PC-3 (cell line): ENCODE measurements at regions of chrX and their contacts with region 1.

Region 1: GRCh38 chrX:24838629-24839028 is 144.9 kb downstream of the POLA1 start:
- DNase-seq: peak; percentile 62
- ATAC-seq: no peak
- H3K4me3 ChIP-seq: no peak overlapping the region
- H3K27ac ChIP-seq: no peak overlapping the region
- H3K4me1 ChIP-seq: no peaks in the 10 kb centered on the region
- H3K27me3 ChIP-seq: no peaks in the 10 kb centered on the region
- CTCF ChIP-seq: peak; percentile 63

Region 2: GRCh38 chrX:24748202-24748843 is 90.3 kb before region 1 on chrX:
- CTCF ChIA-PET with region 1: no interaction called
- POLR2A ChIA-PET with region 1: no interaction called
- intact Hi-C with region 1: loop called (anchors 2 kb)
- DNase-seq: peak; percentile 2
- ATAC-seq: no peak
- H3K4me3 ChIP-seq: no peak overlapping the region
- H3K27ac ChIP-seq: no peak overlapping the region
- H3K4me1 ChIP-seq: no peaks in the 10 kb centered on the region
- H3K27me3 ChIP-seq: no peaks in the 10 kb centered on the region
- CTCF ChIP-seq: no peak

Region 3: GRCh38 chrX:24890677-24891076 is 52.0 kb after region 1 on chrX:
- CTCF ChIA-PET with region 1: no interaction called
- POLR2A ChIA-PET with region 1: no interaction called
- intact Hi-C with region 1: no loop called
- DNase-seq: peak; percentile 58
- ATAC-seq: peak; percentile 79
- H3K4me3 ChIP-seq: no peak overlapping the region
- H3K27ac ChIP-seq: no peak overlapping the region
- H3K4me1 ChIP-seq: 0 out of 2 replicates have a peak, but pooled peaks cover 3% of the 10 kb centered on the region
- H3K27me3 ChIP-seq: no peaks in the 10 kb centered on the region
- CTCF ChIP-seq: no peak

Region 4: DNA sequence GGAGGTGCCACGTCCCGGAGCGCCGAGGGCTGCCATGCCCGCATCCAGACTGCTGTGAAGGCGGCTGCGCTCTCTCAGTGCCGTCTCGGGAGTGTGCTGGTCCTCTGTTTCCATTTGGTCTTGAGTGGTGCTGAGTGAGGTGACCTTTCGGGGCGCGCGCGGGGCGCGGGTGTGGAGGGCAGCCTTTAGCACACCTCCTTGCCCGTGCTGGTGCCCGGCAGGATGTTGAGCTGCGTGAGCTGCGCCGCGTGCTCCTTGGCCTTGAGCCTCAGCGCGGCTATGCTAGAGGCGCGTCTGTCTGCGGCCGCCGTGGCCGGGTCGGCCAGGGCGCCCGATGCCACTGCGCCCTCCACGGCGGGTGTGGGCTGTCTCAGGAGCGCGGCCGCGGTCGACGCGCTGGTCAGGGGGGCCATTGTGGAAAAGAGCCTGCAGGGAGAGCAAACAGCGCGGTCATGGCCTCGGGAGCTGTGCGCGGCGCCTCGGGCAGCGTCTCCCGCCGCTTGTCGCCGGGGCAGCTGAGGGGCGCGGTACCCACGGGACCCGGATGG is 165.9 kb after region 1 on chrX:
- CTCF ChIA-PET with region 1: no interaction called
- POLR2A ChIA-PET with region 1: no interaction called
- intact Hi-C with region 1: loop called (anchors 10 kb)
- DNase-seq: no peak
- ATAC-seq: peak; percentile 47
- H3K4me3 ChIP-seq: peak overlapping the region; percentile 51
- H3K27ac ChIP-seq: no peak overlapping the region
- H3K4me1 ChIP-seq: peaks cover 8% of the 10 kb centered on the region; the same call in 1 of the 2 replicates
- H3K27me3 ChIP-seq: peaks cover 64% of the 10 kb centered on the region
- CTCF ChIP-seq: no peak

Region 5: GRCh38 chrX:25144043-25144940 is 305.7 kb after region 1 on chrX:
- CTCF ChIA-PET with region 1: interaction called, 6 read pairs
- POLR2A ChIA-PET with region 1: no interaction called
- intact Hi-C with region 1: loop called (anchors 1 kb)
- DNase-seq: peak; percentile 60
- ATAC-seq: peak; percentile 67
- H3K4me3 ChIP-seq: no peak overlapping the region
- H3K27ac ChIP-seq: no peak overlapping the region
- H3K4me1 ChIP-seq: no peaks in the 10 kb centered on the region
- H3K27me3 ChIP-seq: no peaks in the 10 kb centered on the region
- CTCF ChIP-seq: peak; percentile 83